ENCODE measurements at regions of chrX and their contacts with region 1.

Region 1: GRCh38 chrX:56978172-56978571 is 17.2 kb downstream of the SPIN3 start:
- ATAC-seq: peak in 5 of 8 experiments; percentile 32 to 71 (median 64)
- H3K4me3 ChIP-seq: no peak overlapping the region
- H3K27ac ChIP-seq: no peak overlapping the region
- H3K4me1 ChIP-seq: no peaks in the 10 kb centered on the region

Region 2: GRCh38 chrX:56802921-56803849 is 175.0 kb before region 1 on chrX:
- in situ Hi-C with region 1: loop called in 1 of 9 experiments (anchors 25 kb)
- ATAC-seq: peak in 4 of 8 experiments; percentile 70 to 82 (median 72)
- H3K4me3 ChIP-seq: no peak overlapping the region
- H3K27ac ChIP-seq: no peak overlapping the region
- H3K4me1 ChIP-seq: no peaks in the 10 kb centered on the region

Region 3: GRCh38 chrX:57083143-57083542 is 105.0 kb after region 1 on chrX:
- in situ Hi-C with region 1: loop called in 1 of 9 experiments (anchors 25 kb)
- ATAC-seq: no peak
- H3K4me3 ChIP-seq: no peak overlapping the region
- H3K27ac ChIP-seq: no peak overlapping the region
- H3K4me1 ChIP-seq: no peaks in the 10 kb centered on the region